Naive thymus-derived CD4-positive, alpha-beta T cell (primary cell): ENCODE measurements at regions of chr1 and their contacts with region 1.

Region 1: GRCh38 chr1:161185282-161185682 is 8.0 kb upstream of the B4GALT3 start:
- DNase-seq: peak; percentile 38 to 92 (median 87)
- ATAC-seq: peak; percentile 88
- H3K4me3 ChIP-seq: peak overlapping the region; percentile 24
- H3K4me3 Mint-ChIP-seq: peak overlapping the region; percentile 76 to 89 (median 84)
- H3K27ac ChIP-seq: peak overlapping the region; percentile 65
- H3K27ac Mint-ChIP-seq: peak overlapping the region; percentile 92 to 99 (median 97)
- H3K4me1 ChIP-seq: peaks cover 74 to 79% of the 10 kb centered on the region in 2 donors
- H3K4me1 Mint-ChIP-seq: peaks cover 65 to 90% (median 80%) of the 10 kb centered on the region in 7 donors
- H3K27me3 ChIP-seq: no peaks in the 10 kb centered on the region
- H3K27me3 Mint-ChIP-seq: no peaks in the 10 kb centered on the region

Region 2: DNA sequence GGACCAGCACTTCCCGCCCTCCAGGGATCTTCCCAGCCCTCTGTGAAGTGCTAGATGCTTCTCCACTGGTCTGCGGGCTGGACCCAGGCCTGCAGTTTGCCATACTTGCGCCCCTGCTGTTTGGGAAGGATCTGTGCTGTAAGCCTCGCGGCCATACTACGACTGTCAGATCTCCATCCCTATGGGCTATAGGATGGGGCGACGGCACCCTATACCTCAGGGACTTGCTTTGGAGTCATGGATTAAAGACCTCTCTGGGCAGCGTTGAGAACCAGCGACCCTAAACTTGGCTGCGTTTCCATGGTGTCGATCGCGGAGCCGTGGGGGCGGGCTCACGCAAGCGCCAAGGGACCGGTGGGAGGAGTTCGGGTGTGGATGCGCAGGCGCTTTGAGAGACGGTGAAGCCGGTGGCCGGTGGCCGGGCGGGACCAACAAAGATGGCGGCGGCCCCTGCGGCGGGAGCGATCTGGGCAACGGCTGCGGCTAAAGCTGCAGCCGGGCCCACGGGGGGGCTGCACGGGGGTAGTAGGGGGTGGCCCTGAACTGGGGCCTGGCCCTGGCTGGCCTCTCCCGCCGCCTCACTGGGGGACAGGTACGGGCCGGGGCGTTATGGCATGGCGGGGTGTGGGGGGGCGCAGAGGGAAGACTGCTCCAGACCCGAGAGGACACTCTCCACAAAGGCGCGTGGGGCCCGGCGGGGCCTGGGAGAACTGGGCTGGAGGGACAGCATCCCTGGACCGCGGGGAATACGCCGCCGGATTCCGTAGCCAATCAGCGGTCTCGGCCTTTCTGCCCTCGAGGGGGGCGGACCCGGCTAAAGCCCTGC is 26.0 kb before region 1 on chr1 and contains the start of gene USP21:
- CTCF ChIA-PET with region 1: interaction called, 3 read pairs
- POLR2A ChIA-PET with region 1: interaction called, 81 read pairs
- intact Hi-C with region 1: loop called in 1 of 2 experiments (anchors 1 kb)
- DNase-seq: peak; percentile 86 to 93 (median 91)
- ATAC-seq: peak; percentile 95
- H3K4me3 ChIP-seq: peak within 1 kb of the TSS; percentile 68
- H3K4me3 Mint-ChIP-seq: peak within 1 kb of the TSS; percentile 88 to 94 (median 92)
- H3K27ac ChIP-seq: peak within 1 kb of the TSS; percentile 84
- H3K27ac Mint-ChIP-seq: peak within 1 kb of the TSS; percentile 89 to 97 (median 93)
- H3K4me1 ChIP-seq: peaks cover 31 to 34% of the 10 kb centered on the region in 2 donors
- H3K4me1 Mint-ChIP-seq: peaks cover 35 to 76% (median 67%) of the 10 kb centered on the region in 7 donors
- H3K27me3 ChIP-seq: no peaks in the 10 kb centered on the region
- H3K27me3 Mint-ChIP-seq: no peaks in the 10 kb centered on the region
- total RNA-seq, gene USP21: 36.0 to 66.0 (median 38.6) TPM

Region 3: DNA sequence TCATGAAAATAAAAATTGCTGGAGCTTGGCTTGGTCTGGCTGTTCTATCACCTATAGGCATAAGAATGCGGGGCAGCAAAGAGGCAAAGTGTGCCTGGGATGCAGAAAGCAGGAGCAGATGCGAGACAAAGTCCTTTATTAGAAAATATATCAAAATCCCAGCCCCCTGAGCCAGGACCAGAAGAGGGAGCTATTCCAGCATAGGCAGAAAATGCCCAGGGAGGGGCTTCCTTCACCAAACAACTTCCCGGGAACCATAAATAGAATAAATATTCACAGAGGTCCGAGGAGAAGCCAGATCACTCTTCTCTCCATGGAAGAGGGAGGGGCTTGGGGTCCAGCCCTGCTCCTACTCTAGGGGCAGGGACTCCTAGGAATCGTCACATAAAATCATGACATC is 14.1 kb before region 1 on chr1:
- CTCF ChIA-PET with region 1: interaction called, 32 read pairs
- POLR2A ChIA-PET with region 1: interaction called, 81 read pairs
- intact Hi-C with region 1: loop called (anchors 1 kb)
- DNase-seq: no peak
- ATAC-seq: no peak
- H3K4me3 ChIP-seq: no peak overlapping the region
- H3K4me3 Mint-ChIP-seq: peak overlapping the region in 1 of 10 donors; percentile 29
- H3K27ac ChIP-seq: no peak overlapping the region
- H3K27ac Mint-ChIP-seq: peak overlapping the region in 4 of 9 donors; percentile 39 to 74 (median 54)
- H3K4me1 ChIP-seq: peaks cover 14 to 16% of the 10 kb centered on the region in 2 donors
- H3K4me1 Mint-ChIP-seq: peaks cover 38 to 67% (median 54%) of the 10 kb centered on the region in 7 donors
- H3K27me3 ChIP-seq: no peaks in the 10 kb centered on the region
- H3K27me3 Mint-ChIP-seq: no peaks in the 10 kb centered on the region

Region 4: DNA sequence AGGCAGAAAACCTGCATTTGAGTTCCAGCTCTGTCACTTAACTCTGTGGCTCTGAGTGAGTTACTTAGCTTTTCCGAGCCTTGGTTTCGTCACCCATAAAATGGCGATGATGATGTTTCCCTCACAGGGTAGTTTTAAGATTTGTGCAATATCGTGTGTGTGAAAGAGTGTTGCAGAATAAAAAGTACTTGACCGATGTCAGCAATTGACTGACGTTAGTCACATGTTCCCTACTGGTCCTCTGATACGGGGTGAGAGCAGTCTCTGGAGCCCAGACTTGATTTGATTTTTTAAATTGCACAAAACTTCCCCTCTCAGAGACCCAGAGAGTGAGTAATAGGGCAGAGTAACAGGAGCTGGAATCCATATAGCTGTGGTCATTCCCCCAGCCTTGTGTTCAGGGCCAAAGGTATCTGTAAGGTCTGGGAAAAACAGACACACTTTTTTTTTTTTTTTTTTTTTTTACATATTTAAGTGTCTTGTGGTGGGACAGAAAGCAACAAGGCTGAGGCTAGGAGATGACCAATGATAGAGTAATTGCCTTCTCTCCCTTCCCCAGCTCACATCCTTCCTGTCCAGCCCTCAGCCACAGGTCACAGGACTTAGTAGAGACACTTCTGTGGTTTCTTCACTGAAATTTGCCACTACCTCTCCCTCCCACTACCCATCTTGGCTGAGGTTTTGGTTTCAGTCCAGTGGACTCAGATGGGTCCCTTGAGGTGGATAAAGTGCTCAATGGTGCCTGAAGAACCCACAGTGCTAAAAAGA is 31.8 kb after region 1 on chr1:
- CTCF ChIA-PET with region 1: interaction called, 6 read pairs
- POLR2A ChIA-PET with region 1: interaction called, 508 read pairs
- intact Hi-C with region 1: no loop called
- DNase-seq: no peak
- ATAC-seq: peak; percentile 82
- H3K4me3 ChIP-seq: no peak overlapping the region
- H3K4me3 Mint-ChIP-seq: peak overlapping the region in 7 of 10 donors; percentile 8 to 73 (median 67)
- H3K27ac ChIP-seq: peak overlapping the region; percentile 52
- H3K27ac Mint-ChIP-seq: peak overlapping the region; percentile 51 to 99 (median 91)
- H3K4me1 ChIP-seq: peaks cover 0 to 45% of the 10 kb centered on the region in 2 donors
- H3K4me1 Mint-ChIP-seq: peaks cover 31 to 64% (median 54%) of the 10 kb centered on the region in 7 donors
- H3K27me3 ChIP-seq: no peaks in the 10 kb centered on the region
- H3K27me3 Mint-ChIP-seq: no peaks in the 10 kb centered on the region

Region 5: GRCh38 chr1:161314201-161314981 is 129.1 kb after region 1 on chr1 and contains the start of gene SDHC:
- CTCF ChIA-PET with region 1: no interaction called
- POLR2A ChIA-PET with region 1: interaction called, 10 read pairs
- intact Hi-C with region 1: no loop called
- DNase-seq: peak; percentile 83 to 95 (median 93)
- ATAC-seq: peak; percentile 99
- H3K4me3 ChIP-seq: peak within 1 kb of the TSS; percentile 72
- H3K4me3 Mint-ChIP-seq: peak within 1 kb of the TSS; percentile 91 to 99 (median 98)
- H3K27ac ChIP-seq: peak within 1 kb of the TSS; percentile 97
- H3K27ac Mint-ChIP-seq: peak within 1 kb of the TSS; percentile 98 to 100 (median 99)
- H3K4me1 ChIP-seq: peaks cover 0 to 15% of the 10 kb centered on the region in 2 donors
- H3K4me1 Mint-ChIP-seq: peaks cover 13 to 39% (median 31%) of the 10 kb centered on the region in 7 donors
- H3K27me3 ChIP-seq: no peaks in the 10 kb centered on the region
- H3K27me3 Mint-ChIP-seq: peaks cover 0 to 7% (median 0%) of the 10 kb centered on the region in 5 donors
- total RNA-seq, gene SDHC: 66.3 to 174 (median 106) TPM

Region 6: DNA sequence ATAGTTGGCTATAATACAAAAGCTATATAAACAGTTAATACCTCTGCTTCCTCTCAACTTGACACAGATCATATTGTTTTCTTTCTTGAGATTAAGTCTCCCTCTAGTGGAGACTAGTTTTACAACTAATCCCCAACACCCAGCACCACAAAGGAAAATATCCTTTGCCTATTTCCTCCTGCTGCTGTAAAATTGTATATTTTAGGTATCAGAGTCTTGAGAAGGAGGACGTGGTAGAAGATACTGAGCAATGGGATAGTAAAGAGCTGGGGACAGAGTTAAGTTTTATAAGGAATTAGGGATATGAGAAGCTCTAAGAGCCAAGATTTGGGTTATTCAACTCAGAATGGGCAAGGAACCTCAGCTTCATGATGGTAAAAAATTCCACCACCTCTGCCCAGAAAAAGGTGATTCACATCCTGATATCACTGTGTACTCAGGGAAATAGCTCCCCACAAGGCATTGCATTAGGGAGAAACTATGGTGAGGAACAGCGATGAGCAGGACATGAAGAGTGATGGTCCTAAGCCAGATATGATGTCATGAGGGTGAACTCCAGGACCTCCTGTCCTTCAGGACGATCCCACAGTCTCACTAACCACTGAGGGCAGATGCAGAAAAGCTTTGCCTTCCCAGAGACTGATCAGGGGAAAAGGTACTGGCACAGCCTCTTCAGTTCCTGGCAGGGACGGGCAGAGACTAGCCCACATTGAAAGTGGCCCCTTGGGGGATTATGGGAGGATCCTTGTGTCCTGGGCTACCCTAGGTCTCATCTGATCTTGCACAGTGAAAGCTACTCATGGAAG is 197.1 kb after region 1 on chr1:
- CTCF ChIA-PET with region 1: interaction called, 13 read pairs
- POLR2A ChIA-PET with region 1: interaction called, 4 read pairs
- intact Hi-C with region 1: loop called in 1 of 2 experiments (anchors 1 kb)
- DNase-seq: peak in 6 of 9 donors; percentile 40 to 68 (median 59)
- ATAC-seq: peak; percentile 91
- H3K4me3 ChIP-seq: no peak overlapping the region
- H3K4me3 Mint-ChIP-seq: no peak overlapping the region
- H3K27ac ChIP-seq: no peak overlapping the region
- H3K27ac Mint-ChIP-seq: peak overlapping the region in 3 of 9 donors; percentile 53 to 76 (median 73)
- H3K4me1 ChIP-seq: peaks cover 0 to 3% of the 10 kb centered on the region in 2 donors
- H3K4me1 Mint-ChIP-seq: peaks cover 0 to 19% (median 13%) of the 10 kb centered on the region in 7 donors
- H3K27me3 ChIP-seq: no peaks in the 10 kb centered on the region
- H3K27me3 Mint-ChIP-seq: no peaks in the 10 kb centered on the region